Aorta (tissue), 5 donors: ENCODE measurements at regions of chr5 and their contacts with region 1.

Region 1: GRCh38 chr5:140113699-140114263 is at the start of gene PURA:
- DNase-seq: peak; percentile 98 to 99
- ATAC-seq: peak; percentile 96
- H3K4me3 ChIP-seq: peak within 1 kb of the TSS; percentile 76 to 77
- H3K27ac ChIP-seq: peak within 1 kb of the TSS; percentile 62 to 87
- H3K4me1 ChIP-seq: peaks cover 0 to 3% of the 10 kb centered on the region in 2 donors
- H3K27me3 ChIP-seq: no peaks in the 10 kb centered on the region
- total RNA-seq, gene PURA: 46.2 to 50.0 TPM

Region 2: DNA sequence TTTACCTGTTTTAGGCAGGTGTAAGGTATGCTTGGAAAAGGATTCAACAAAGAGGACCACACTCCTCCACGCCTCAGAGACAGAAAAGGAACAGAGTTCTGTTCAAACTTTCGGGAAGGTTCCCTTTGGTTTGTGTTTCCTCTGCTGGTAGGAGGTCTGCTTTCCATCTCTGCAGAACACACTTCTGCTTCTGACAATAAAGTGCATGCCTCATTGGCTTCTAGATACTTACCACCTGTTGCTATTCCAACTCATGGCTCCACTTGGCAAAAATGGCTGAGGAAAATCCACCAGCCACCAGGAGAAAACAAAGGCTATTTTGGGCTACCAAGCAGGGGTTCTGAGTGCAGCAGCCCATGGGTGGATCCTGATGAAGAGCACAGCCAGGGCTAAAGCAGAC is 183.4 kb before region 1 on chr5:
- intact Hi-C with region 1: no loop called
- DNase-seq: no peak
- ATAC-seq: no peak
- H3K4me3 ChIP-seq: no peak overlapping the region
- H3K27ac ChIP-seq: no peak overlapping the region
- H3K4me1 ChIP-seq: no peaks in the 10 kb centered on the region
- H3K27me3 ChIP-seq: no peaks in the 10 kb centered on the region

Region 3: GRCh38 chr5:140145818-140146522 is 32.2 kb after region 1 on chr5:
- intact Hi-C with region 1: loop called (anchors 2 to 5 kb)
- DNase-seq: peak; percentile 82 to 93
- ATAC-seq: peak; percentile 90
- H3K4me3 ChIP-seq: peak overlapping the region in 1 of 2 donors; percentile 5
- H3K27ac ChIP-seq: no peak overlapping the region
- H3K4me1 ChIP-seq: no peaks in the 10 kb centered on the region
- H3K27me3 ChIP-seq: no peaks in the 10 kb centered on the region